ENCODE measurements at regions of chr11 and their contacts with region 1.

Region 1: DNA sequence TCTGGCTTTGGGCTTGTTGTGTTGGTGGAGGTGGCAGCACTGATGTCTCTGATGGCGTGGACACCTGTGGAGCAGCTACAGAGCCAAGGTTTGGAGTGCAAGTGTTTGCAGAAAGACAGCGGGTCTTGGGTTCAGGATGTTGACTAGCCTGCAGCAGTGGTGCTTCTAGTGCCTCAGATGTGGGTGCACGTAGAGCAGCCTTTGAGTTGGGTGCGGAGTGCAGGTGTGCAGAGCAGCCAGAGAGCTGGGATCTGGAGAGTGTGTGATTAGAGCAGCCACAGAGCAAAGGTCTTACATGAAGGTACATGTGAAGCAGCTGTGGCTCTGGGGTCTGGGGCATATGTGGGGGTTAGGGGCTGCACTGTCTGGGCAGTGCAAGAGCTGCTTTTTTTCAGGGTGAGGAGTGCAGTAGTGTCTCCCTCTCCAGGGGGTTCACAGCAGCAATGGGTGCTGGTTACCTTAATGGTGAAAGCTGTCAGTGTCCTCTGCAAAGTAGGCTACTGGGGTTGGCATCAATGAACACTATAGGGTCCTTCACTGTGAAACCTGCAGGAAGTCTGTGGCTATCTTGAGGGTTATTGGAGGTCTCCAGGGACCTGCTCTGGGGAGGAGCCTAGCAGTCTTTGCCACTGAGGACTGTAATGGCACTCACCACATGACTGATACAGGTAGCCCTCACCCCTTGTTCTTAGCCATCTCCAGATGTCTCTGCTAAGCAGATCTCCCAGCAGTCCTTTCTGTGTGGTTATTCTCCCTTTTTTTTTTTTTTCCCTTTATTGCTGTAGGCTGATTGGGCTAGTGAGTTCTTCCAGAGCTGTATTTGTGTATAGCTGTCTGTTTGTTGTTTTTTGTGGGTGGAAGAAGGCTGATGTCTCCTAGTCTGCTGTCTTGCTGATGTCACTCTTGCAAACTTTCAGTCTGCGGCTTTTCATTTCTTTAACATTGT is 14.3 kb downstream of the BIRC2 start:
- DNase-seq: no peak
- H3K4me3 ChIP-seq: no peak overlapping the region; the same call in 1 of the 2 replicates
- H3K27ac ChIP-seq: no peak overlapping the region
- H3K4me1 ChIP-seq: no peaks in the 10 kb centered on the region
- H3K27me3 ChIP-seq: no peaks in the 10 kb centered on the region
- CTCF ChIP-seq: no peak

Region 2: GRCh38 chr11:102287964-102288724 is 73.2 kb before region 1 on chr11:
- CTCF ChIA-PET with region 1: no interaction called
- POLR2A ChIA-PET with region 1: no interaction called
- intact Hi-C with region 1: loop called (anchors 5 kb)
- DNase-seq: peak; percentile 38 to 67
- H3K4me3 ChIP-seq: no peak overlapping the region
- H3K27ac ChIP-seq: no peak overlapping the region
- H3K4me1 ChIP-seq: peaks cover 24% of the 10 kb centered on the region
- H3K27me3 ChIP-seq: no peaks in the 10 kb centered on the region
- CTCF ChIP-seq: peak; percentile 92

Region 3: DNA sequence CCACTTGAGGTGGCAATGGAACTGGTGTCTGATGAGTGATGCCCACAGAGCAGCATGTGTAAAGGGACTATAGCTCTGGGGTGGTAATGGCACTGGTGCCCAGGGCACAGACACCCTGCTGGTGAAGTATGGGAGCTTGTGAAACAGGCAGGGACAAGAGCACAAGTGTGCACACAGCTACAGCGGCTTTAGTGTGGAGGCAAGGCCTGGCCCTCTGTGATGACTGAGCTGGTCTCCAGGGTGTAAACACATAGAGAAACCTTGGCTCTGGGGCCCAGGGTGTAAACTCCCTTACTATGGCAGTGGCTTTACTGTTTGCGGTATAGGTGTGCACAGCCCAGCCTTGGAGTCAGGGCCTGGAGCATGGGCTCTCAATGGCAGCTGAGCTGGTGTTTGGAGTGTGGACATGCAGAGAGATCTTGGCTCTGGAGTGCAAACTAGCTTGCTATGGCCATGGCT is 31.9 kb after region 1 on chr11:
- CTCF ChIA-PET with region 1: no interaction called
- POLR2A ChIA-PET with region 1: no interaction called
- intact Hi-C with region 1: no loop called
- DNase-seq: no peak
- H3K4me3 ChIP-seq: no peak overlapping the region
- H3K27ac ChIP-seq: no peak overlapping the region
- H3K4me1 ChIP-seq: no peaks in the 10 kb centered on the region
- H3K27me3 ChIP-seq: no peaks in the 10 kb centered on the region
- CTCF ChIP-seq: no peak